CD8-positive, alpha-beta T cell (primary cell): ENCODE measurements at regions of chr4 and their contacts with region 1.

Region 1: GRCh38 chr4:151099229-151099975 is at the start of gene RPS3A:
- DNase-seq: peak; percentile 94 to 99 (median 98)
- ATAC-seq: peak; percentile 90
- H3K4me3 ChIP-seq: peak within 1 kb of the TSS; percentile 85 to 97
- H3K4me3 Mint-ChIP-seq: peak within 1 kb of the TSS; percentile 97
- H3K27ac ChIP-seq: peak within 1 kb of the TSS; percentile 88 to 96
- H3K27ac Mint-ChIP-seq: peak within 1 kb of the TSS; percentile 98
- H3K4me1 ChIP-seq: peaks cover 29% of the 10 kb centered on the region
- H3K4me1 Mint-ChIP-seq: peaks cover 35% of the 10 kb centered on the region
- H3K27me3 ChIP-seq: peaks cover 0 to 2% of the 10 kb centered on the region in 2 experiments
- H3K27me3 Mint-ChIP-seq: no peaks in the 10 kb centered on the region
- CTCF ChIP-seq: peak; percentile 84
- total RNA-seq, gene RPS3A: 3,746 to 3,978 TPM

Region 2: DNA sequence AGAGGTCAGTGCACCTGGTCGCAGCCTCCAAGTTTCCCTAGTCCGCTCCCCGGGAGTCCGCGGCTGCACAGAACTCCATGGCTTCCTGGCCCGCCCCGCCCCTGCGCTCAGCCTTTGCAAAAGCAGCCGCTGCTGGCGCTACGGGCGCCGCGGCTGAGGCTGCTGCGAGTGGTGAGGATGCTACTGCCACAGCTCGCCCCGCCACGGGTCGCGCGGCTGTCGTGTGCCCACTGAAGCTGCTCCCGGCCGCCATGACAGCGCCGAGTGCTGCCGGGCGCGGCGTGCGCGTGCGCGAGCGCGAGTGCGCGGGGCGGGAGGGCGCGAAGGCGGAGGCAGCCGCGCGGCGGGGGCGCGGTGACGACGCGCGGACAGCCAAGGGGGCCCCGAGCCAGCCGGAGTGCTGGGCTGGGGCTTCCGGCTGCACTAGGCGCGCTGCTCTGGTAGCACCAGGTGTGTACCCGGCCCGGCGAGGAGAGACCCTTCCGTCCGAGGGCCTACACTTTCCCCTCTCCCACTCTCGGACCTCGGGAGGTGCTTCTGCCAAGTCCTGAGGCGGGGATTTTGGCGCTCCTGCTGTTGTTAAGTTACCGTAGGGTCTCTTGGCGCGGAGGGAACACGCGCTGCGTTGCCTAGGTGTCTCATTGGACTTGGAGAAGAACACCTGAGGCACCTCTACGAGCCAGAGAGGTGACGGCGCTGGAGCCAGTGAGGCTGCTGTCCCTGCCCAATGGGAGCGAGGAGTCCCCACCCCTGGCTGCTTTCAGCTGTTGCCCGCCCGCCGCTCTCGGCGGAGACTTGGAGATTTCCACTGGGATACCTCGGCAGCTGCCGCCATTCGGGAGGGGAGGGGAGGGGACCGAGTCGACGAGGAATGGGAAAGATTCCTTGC is 83.7 kb before region 1 on chr4:
- CTCF ChIA-PET with region 1: no interaction called
- POLR2A ChIA-PET with region 1: interaction called, 31 read pairs
- intact Hi-C with region 1: loop called (anchors 1 kb)
- DNase-seq: peak; percentile 68 to 95 (median 81)
- ATAC-seq: peak; percentile 74
- H3K4me3 ChIP-seq: peak overlapping the region; percentile 89 to 96
- H3K4me3 Mint-ChIP-seq: peak overlapping the region; percentile 100
- H3K27ac ChIP-seq: peak overlapping the region; percentile 96 to 97
- H3K27ac Mint-ChIP-seq: peak overlapping the region; percentile 99
- H3K4me1 ChIP-seq: peaks cover 16% of the 10 kb centered on the region
- H3K4me1 Mint-ChIP-seq: peaks cover 33% of the 10 kb centered on the region
- H3K27me3 ChIP-seq: no peaks in the 10 kb centered on the region
- H3K27me3 Mint-ChIP-seq: no peaks in the 10 kb centered on the region
- CTCF ChIP-seq: no peak

Region 3: GRCh38 chr4:151087467-151087866 is 11.9 kb before region 1 on chr4:
- CTCF ChIA-PET with region 1: interaction called, 13 read pairs
- POLR2A ChIA-PET with region 1: interaction called, 3 read pairs
- intact Hi-C with region 1: no loop called
- DNase-seq: no peak
- ATAC-seq: no peak
- H3K4me3 ChIP-seq: no peak overlapping the region
- H3K4me3 Mint-ChIP-seq: no peak overlapping the region
- H3K27ac ChIP-seq: no peak overlapping the region
- H3K27ac Mint-ChIP-seq: no peak overlapping the region
- H3K4me1 ChIP-seq: no peaks in the 10 kb centered on the region
- H3K4me1 Mint-ChIP-seq: no peaks in the 10 kb centered on the region
- H3K27me3 ChIP-seq: peaks cover 0 to 3% of the 10 kb centered on the region in 2 experiments
- H3K27me3 Mint-ChIP-seq: peaks cover 7% of the 10 kb centered on the region
- CTCF ChIP-seq: no peak

Region 4: GRCh38 chr4:151408630-151409469 is 309.4 kb after region 1 on chr4 and contains the start of gene FHIP1A:
- CTCF ChIA-PET with region 1: no interaction called
- POLR2A ChIA-PET with region 1: no interaction called
- intact Hi-C with region 1: loop called in 1 of 2 experiments (anchors 5 kb)
- DNase-seq: peak; percentile 60 to 87 (median 82)
- ATAC-seq: peak; percentile 96
- H3K4me3 ChIP-seq: peak within 1 kb of the TSS; percentile 60 to 66
- H3K4me3 Mint-ChIP-seq: peak within 1 kb of the TSS; percentile 93
- H3K27ac ChIP-seq: peak within 1 kb of the TSS in 1 of 2 experiments; percentile 24
- H3K27ac Mint-ChIP-seq: peak within 1 kb of the TSS; percentile 67
- H3K4me1 ChIP-seq: peaks cover 17% of the 10 kb centered on the region
- H3K4me1 Mint-ChIP-seq: peaks cover 25% of the 10 kb centered on the region
- H3K27me3 ChIP-seq: no peaks in the 10 kb centered on the region
- H3K27me3 Mint-ChIP-seq: peaks cover 18% of the 10 kb centered on the region
- CTCF ChIP-seq: no peak
- total RNA-seq, gene FHIP1A: 1.5 to 2.1 TPM

Region 5: GRCh38 chr4:152112887-152113286 is 1013.5 kb after region 1 on chr4:
- CTCF ChIA-PET with region 1: no interaction called
- POLR2A ChIA-PET with region 1: no interaction called
- intact Hi-C with region 1: loop called in 1 of 2 experiments (anchors 10 kb)
- DNase-seq: peak in 2 of 9 experiments; percentile 26 to 49
- ATAC-seq: no peak
- H3K4me3 ChIP-seq: no peak overlapping the region
- H3K4me3 Mint-ChIP-seq: no peak overlapping the region
- H3K27ac ChIP-seq: peak overlapping the region in 1 of 2 experiments; percentile 34
- H3K27ac Mint-ChIP-seq: peak overlapping the region; percentile 97
- H3K4me1 ChIP-seq: peaks cover 81% of the 10 kb centered on the region
- H3K4me1 Mint-ChIP-seq: peaks cover 92% of the 10 kb centered on the region
- H3K27me3 ChIP-seq: no peaks in the 10 kb centered on the region
- H3K27me3 Mint-ChIP-seq: no peaks in the 10 kb centered on the region
- CTCF ChIP-seq: no peak

Region 6: DNA sequence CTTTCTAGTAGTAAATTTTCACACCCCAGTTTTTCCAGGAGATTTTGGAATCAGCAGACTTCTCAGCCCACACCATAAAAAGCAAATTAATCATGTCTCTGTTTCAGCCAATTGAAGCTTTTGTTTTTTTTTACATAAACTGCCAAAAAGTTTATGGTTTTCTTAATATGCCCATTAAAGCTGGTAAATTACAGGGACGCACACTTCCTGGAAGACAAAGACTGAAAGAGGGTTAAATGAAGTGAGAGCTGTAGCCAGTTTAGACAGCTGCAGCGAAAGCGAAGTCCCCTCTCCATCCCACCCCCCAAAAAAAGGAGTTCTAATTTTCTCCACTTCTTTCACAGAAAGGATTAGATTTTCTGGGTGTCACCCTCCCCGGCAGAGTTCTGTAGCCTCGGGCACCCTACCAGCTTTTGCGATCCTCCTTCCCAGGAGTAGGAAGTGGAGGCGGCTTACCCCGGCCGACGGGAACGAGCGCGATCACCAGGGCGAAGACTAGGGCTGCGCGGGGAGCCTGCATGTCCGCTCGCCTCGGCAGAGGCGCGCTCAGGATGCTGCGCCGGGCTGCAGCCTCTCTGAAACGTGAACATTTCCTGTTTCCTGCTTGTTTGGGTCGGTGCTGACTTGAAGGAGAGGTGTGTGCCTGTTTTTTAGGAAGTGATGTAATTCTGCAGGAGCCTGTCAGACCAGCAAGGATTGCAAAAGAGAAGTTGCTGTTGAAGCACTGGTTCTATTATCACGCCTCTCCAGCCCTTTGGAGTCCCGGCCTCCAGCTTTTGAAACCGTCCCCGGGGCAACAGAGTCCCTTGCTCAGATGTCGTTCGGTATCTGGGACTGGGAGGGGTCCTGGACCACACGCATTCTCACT is 1580.2 kb after region 1 on chr4 and contains the start of gene TMEM154:
- CTCF ChIA-PET with region 1: no interaction called
- POLR2A ChIA-PET with region 1: no interaction called
- intact Hi-C with region 1: loop called in 1 of 2 experiments (anchors 10 kb)
- DNase-seq: peak; percentile 44 to 86 (median 71)
- ATAC-seq: peak; percentile 97
- H3K4me3 ChIP-seq: peak within 1 kb of the TSS; percentile 67 to 68
- H3K4me3 Mint-ChIP-seq: peak within 1 kb of the TSS; percentile 93
- H3K27ac ChIP-seq: peak within 1 kb of the TSS; percentile 58 to 67
- H3K27ac Mint-ChIP-seq: peak within 1 kb of the TSS; percentile 95
- H3K4me1 ChIP-seq: peaks cover 12% of the 10 kb centered on the region
- H3K4me1 Mint-ChIP-seq: peaks cover 46% of the 10 kb centered on the region
- H3K27me3 ChIP-seq: no peaks in the 10 kb centered on the region
- H3K27me3 Mint-ChIP-seq: no peaks in the 10 kb centered on the region
- CTCF ChIP-seq: no peak
- total RNA-seq, gene TMEM154: 10.0 TPM